Common myeloid progenitor, CD34-positive (primary cell): ENCODE measurements at regions of chr11 and their contacts with region 1.

Region 1: DNA sequence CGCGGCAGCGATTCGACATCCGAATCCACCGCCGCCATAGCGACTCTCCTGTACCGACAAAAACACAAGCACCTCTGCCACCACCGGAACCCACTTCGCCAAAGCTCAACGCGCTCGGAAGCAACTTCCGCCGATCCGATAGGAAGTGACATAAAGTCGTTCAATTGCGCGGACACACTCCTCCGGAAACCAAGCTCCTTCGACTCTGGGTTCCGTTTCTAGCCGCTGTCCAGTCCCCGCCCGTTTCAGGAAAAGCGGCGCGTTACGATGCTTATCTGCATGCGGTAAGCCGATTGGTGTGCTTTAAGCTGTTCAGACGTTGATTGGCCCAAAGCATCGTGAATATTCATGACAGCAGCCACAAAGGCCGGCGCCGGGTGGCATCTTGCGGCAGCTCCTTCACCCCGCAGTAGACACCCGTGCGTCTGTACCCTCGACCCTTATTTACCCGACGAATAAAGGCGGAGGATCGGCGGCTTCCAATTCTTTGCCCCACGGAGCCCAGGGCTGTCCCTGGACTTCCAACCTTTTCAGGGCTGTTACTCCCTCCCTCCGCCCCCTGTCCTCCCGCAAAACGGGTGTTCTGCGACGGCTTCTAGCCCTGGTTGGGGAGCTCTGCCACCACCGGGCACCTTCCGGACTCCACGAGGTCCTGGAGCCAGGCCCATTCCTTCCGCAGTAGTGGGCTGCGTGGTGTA is at the start of gene TUT1:
- DNase-seq: peak; percentile 100
- H3K4me3 ChIP-seq: peak within 1 kb of the TSS; percentile 58 to 95 (median 89)
- H3K27ac ChIP-seq: peak within 1 kb of the TSS; percentile 93 to 99
- H3K4me1 ChIP-seq: peaks cover 16 to 35% (median 29%) of the 10 kb centered on the region in 4 experiments
- H3K27me3 ChIP-seq: no peaks in the 10 kb centered on the region

Region 2: DNA sequence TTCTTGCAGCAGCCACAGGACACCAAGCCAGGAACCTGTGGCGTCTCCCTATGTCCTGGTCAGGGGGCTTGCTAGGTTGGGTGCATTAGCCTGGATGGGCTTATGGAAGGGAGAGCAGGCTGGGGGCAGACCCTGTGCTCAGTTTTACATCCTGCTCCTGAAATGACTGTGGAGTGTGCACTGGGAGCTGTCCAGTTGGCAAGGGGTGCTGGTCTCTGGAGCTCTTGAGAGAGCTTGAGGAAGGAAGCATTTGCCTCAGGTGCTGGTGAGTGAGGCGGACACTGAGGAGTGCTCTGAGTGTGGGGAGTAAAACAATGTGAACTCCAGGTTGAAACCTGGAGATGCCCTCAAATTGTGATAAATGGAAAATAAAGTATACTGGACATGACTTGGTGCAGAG is 296.1 kb before region 1 on chr11:
- CTCF ChIA-PET with region 1: no interaction called
- POLR2A ChIA-PET with region 1: no interaction called
- DNase-seq: peak; percentile 9 to 58 (median 51)
- H3K4me3 ChIP-seq: no peak overlapping the region
- H3K27ac ChIP-seq: no peak overlapping the region
- H3K4me1 ChIP-seq: no peaks in the 10 kb centered on the region
- H3K27me3 ChIP-seq: peaks cover 0 to 25% (median 2%) of the 10 kb centered on the region in 5 experiments

Region 3: DNA sequence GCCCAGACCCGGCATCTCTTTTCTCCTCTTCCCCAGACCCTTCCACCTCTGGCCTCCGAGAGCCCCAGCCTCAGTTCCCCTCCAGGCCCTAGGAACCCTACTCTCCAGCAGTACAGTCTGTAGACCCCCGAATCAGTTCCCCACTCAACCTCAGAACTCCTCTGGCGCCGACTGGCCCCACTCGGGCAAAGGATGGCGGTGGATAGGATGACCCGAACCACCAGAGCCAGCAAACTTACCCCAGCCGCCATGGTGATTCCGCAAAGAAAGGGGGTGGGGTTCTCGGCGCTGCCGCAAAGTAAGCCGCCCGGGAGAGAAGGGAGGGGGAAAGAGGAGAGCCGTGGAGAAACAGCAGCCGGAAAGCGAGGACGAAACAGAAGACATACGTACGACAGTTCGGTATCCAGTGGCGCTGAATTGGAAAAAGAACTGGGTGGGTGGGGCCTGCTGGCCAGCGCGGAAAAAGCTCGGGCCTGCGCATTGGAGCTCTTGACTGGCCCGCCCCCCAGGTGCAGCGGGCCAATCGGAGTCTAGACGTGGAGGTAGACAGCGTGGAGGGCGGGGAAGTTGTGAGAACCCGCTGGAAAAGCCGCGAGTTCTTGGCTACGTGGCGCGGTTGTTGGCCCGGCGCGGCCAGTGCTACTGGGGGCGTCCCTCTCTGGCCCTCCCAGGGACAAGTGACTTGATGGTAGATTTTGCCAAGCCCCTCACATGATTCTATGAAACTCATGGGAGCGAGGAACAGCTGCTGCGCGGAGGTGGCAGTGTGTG is 17.8 kb before region 1 on chr11 and contains the start of gene EEF1G:
- CTCF ChIA-PET with region 1: interaction called, 21 read pairs
- POLR2A ChIA-PET with region 1: interaction called, 25 read pairs
- DNase-seq: peak; percentile 100
- H3K4me3 ChIP-seq: peak within 1 kb of the TSS; percentile 86 to 99 (median 96)
- H3K27ac ChIP-seq: peak within 1 kb of the TSS; percentile 88 to 95
- H3K4me1 ChIP-seq: peaks cover 10 to 38% (median 30%) of the 10 kb centered on the region in 4 experiments
- H3K27me3 ChIP-seq: no peaks in the 10 kb centered on the region

Region 4: DNA sequence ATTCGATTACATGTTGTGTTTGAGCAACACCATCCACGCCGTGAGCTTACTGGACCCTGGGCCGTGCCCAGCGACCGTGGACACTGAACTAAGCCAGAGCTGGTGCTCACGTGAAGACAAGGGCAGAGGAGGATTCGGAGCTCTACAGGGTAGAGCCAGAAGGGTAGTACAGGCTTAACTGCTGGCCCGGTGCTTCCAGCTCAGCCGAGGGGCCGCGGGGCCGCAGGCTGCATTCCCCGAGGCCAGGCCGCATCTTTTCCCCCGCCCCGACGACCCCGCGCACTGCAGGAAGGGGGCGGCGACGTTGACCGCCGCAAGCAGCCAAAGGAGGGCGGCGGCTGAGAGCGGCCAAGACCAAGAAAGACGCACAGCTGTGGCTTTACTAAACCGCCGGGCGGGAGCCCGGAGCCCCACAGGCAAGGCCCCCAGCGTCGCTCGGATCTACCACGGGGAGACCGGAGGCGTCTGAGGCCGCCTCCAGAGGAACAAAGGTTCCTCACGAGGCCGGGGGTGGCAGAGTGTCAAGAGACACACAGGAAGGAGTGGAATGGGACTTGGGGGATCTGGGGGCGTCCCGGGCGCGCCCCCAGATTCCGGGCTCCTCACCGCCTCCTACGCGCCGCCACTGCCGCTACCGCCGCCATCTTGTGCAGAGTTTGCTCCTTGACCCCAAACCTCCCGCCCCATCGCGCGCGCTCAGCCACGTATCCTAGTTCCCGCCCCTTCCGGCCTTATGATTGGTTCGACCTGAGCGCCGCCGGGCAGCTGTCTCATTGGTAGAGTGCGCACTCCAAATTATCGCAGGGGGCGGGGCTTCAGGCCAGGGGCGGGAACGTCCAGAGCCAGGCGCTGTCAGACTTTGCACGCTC is 54.6 kb after region 1 on chr11 and contains the start of gene GANAB:
- CTCF ChIA-PET with region 1: interaction called, 13 read pairs
- POLR2A ChIA-PET with region 1: interaction called, 4 read pairs
- DNase-seq: peak; percentile 98 to 99 (median 99)
- H3K4me3 ChIP-seq: peak within 1 kb of the TSS; percentile 81 to 100 (median 92)
- H3K27ac ChIP-seq: peak within 1 kb of the TSS; percentile 93 to 97
- H3K4me1 ChIP-seq: peaks cover 0 to 25% (median 21%) of the 10 kb centered on the region in 4 experiments
- H3K27me3 ChIP-seq: no peaks in the 10 kb centered on the region

Region 5: DNA sequence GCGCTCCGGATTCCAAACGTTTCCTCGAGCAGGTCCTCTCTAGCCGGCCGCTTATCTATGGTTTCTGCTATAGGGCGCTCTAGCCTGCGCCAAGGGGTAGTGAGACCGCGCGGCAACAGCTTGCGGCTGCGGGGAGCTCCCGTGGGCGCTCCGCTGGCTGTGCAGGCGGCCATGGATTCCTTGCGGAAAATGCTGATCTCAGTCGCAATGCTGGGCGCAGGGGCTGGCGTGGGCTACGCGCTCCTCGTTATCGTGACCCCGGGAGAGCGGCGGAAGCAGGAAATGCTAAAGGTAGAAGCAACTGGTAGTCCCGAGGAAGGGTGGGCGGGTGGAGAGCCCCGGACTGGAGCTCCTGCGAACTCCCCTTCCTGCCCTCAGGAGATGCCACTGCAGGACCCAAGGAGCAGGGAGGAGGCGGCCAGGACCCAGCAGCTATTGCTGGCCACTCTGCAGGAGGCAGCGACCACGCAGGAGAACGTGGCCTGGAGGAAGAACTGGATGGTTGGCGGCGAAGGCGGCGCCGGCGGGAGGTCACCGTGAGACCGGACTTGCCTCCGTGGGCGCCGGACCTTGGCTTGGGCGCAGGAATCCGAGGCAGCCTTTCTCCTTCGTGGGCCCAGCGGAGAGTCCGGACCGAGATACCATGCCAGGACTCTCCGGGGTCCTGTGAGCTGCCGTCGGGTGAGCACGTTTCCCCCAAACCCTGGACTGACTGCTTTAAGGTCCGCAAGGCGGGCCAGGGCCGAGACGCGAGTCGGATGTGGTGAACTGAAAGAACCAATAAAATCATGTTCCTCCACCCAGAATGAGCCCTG is 80.2 kb after region 1 on chr11 and contains the starts of genes LBHD1 and UQCC3:
- CTCF ChIA-PET with region 1: interaction called, 13 read pairs
- POLR2A ChIA-PET with region 1: interaction called, 20 read pairs
- DNase-seq: peak; percentile 92 to 96 (median 94)
- H3K4me3 ChIP-seq: peak within 1 kb of the TSS; percentile 82 to 100 (median 94)
- H3K27ac ChIP-seq: peak within 1 kb of the TSS; percentile 84 to 89
- H3K4me1 ChIP-seq: peaks cover 0 to 49% (median 31%) of the 10 kb centered on the region in 4 experiments
- H3K27me3 ChIP-seq: no peaks in the 10 kb centered on the region

Region 6: DNA sequence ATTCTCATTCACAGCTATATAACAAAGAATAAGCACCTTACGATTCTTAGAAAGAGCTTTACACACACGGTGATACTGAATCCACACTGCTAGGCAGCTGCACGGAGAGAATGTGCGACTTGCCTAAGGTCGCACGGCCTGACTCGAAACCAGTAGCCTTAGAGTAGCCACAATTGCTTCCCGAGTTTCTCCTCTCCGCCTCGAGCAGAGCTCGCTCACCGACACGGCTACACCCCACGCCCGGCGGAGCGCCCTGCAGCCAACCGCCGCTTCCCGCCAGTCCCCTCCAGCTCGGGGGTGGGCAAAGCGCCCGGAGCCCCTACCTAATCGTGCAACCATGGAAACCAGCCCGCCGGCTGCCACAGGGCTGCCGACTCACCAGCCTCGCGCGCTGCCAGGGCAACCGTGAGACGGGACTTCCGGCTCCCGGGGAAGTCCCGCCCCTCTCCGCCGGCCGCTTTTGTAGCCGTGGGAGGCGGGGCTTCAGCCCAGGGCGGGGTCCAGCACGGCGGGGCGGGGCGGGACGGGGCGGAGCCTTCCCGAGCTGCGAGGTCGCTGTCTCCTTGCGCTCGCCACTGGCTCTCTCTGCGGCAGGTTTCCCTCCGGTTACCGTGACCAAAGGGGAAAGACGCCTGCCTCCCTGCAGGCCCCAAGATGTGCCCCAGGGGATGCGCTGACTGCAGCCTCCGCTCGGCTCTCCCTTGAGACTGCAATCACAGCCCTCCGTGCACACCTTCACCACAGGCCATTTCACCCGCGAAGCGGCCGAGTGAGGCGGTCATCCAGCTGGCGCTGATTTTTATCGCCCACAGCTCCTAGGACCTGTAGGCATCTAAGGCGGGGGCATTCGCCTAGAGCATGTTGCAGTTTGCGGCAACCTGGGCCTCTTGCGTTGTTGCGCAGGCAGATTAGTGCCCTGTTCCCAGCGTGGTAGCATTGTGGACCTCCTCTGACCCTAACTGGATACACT is 114.6 kb after region 1 on chr11:
- CTCF ChIA-PET with region 1: interaction called, 16 read pairs
- POLR2A ChIA-PET with region 1: interaction called, 10 read pairs
- DNase-seq: peak; percentile 95 to 98 (median 98)
- H3K4me3 ChIP-seq: peak overlapping the region; percentile 33 to 90 (median 76)
- H3K27ac ChIP-seq: peak overlapping the region; percentile 89 to 92
- H3K4me1 ChIP-seq: peaks cover 8 to 56% (median 44%) of the 10 kb centered on the region in 4 experiments
- H3K27me3 ChIP-seq: no peaks in the 10 kb centered on the region